ENCODE measurements at regions of chr6 and their contacts with region 1.

Region 1: DNA sequence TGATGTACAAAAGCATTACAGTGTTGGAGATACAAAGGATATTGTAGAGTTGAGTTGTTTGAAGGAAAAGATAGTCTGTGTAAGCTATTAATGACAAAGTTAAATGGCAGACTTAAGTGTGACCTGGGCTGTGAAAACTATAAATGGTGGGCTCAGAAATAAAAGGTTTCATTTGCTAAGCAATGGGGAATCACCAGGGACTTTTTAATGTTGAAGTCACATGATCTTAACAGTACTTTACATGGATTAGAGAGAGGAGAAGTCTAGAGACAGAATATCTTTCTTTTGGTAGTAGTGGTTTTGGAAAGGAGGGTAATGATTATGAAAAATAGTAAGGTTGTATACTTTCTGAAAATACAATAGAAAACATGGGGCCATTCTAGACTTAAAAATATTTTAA is 67.1 kb downstream of the SCAF8 start:
- DNase-seq: no peak
- H3K4me3 ChIP-seq: no peak overlapping the region
- H3K4me1 ChIP-seq: no peaks in the 10 kb centered on the region
- H3K27me3 ChIP-seq: no peaks in the 10 kb centered on the region

Region 2: DNA sequence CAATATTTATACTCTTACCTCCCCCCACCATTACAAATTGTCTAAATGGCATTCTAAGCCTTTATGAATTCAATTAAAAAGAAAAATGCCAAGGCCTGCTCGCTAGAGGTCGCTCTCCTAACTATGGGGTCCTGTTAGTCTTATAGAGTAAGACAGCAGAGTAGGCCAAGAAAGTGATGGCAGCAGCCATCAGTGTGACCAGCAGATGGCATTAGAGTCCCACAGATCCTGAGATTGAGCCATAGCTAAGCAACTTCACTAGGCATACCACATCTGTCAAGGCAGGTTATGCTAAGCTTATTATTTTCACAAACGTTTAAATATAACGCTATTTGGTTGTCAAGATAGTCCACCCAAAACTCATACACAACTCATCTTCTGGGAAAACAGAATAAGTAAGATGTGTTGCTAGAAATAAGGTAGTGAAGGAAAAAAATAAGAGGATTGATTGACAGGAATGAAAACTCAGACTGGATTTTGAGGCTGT is 124.7 kb before region 1 on chr6:
- in situ Hi-C with region 1: loop called (anchors 5 kb)
- DNase-seq: peak; percentile 93
- H3K4me3 ChIP-seq: no peak overlapping the region
- H3K4me1 ChIP-seq: no peaks in the 10 kb centered on the region
- H3K27me3 ChIP-seq: no peaks in the 10 kb centered on the region